Caco-2 (cell line): ENCODE measurements at regions of chr2 and their contacts with region 1.

Region 1: DNA sequence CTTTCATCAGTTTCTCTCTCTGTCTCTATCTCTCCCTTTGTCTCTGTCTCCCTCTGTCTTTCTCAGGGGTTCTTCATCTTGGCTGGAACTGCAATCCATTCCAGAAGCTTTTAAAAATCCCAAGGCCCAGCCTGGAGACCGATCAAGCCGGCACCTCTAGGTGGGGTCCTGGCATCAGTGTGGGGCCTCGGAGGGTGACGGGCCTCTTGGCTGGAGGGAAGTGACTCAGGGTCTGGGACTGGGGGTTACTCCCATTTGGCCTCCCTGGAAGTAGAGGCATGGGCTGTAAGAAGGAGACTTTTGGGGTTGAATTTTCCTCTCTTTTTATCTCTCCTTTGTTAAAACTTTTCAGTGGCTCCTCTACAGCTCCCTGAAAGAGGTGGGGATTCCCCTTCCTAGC is 52.8 kb upstream of the OTOF start:
- DNase-seq: no peak
- H3K4me3 ChIP-seq: no peak overlapping the region
- H3K4me3 Mint-ChIP-seq: no peak overlapping the region
- H3K27ac Mint-ChIP-seq: no peak overlapping the region
- H3K4me1 ChIP-seq: no peaks in the 10 kb centered on the region
- H3K4me1 Mint-ChIP-seq: no peaks in the 10 kb centered on the region
- H3K27me3 ChIP-seq: no peaks in the 10 kb centered on the region
- H3K27me3 Mint-ChIP-seq: peaks cover 3% of the 10 kb centered on the region
- CTCF ChIP-seq: no peak

Region 2: DNA sequence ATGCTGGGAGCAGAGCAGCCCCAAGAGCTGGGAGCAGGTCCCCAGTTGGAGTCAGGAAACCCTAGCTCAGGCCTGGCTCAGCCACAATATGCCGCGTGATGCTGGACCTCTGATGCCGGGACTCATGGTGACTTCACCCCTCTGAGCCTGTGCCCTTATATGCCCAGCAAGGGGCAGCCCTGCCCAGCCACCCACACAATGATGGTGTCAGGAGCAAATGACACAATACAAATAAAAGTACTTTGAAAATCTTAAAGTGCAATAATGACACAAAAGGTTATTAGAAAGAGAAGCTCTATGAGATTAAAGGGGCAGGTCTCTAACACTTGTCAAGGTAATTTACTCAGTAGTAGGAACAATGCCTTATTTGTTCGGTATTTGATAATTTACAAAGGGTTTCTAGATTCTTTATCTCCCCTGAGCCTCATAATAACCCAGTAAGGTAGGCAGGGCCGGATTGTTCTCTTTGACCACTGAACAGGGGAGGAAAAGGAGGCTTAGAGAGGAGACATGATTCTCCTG is 530.1 kb before region 1 on chr2:
- CTCF ChIA-PET with region 1: no interaction called
- POLR2A ChIA-PET with region 1: no interaction called
- intact Hi-C with region 1: no loop called
- DNase-seq: no peak
- H3K4me3 ChIP-seq: no peak overlapping the region
- H3K4me3 Mint-ChIP-seq: no peak overlapping the region
- H3K27ac Mint-ChIP-seq: peak overlapping the region; percentile 95
- H3K4me1 ChIP-seq: peaks cover 37% of the 10 kb centered on the region
- H3K4me1 Mint-ChIP-seq: peaks cover 56% of the 10 kb centered on the region
- H3K27me3 ChIP-seq: no peaks in the 10 kb centered on the region
- H3K27me3 Mint-ChIP-seq: no peaks in the 10 kb centered on the region
- CTCF ChIP-seq: no peak

Region 3: DNA sequence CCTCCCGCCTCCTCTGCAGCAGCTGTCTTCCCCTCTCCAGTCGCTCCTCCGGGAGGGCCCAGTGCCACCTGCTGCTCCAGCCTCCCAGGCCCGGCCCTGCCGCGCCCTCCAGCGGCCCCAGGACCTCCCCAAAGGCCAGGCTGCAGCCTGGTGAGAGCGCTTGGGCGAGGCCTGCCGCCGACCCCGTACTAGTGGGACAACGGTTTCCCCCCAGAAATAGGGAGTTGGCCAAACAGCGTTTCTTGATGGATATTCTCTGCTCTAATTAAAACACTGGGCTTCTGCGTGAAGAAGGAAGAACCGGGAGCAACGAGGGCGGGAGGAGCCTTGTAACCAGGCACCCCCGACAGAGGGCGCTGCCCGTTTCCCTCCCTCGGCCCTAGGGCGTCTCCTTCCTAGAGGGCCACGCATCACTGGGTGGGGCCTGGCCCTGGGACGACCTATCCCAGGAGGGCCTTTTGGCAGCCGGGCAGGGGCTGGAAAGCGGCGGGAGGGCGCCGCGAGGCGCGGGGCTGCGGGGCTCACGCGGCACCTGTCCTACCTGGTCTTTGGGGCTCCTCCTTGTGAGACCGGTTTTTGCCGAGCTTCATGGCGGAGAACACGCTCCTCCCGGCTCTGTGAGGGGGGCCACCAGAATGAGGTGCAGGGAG is 27.3 kb before region 1 on chr2:
- CTCF ChIA-PET with region 1: no interaction called
- POLR2A ChIA-PET with region 1: no interaction called
- intact Hi-C with region 1: no loop called
- DNase-seq: peak; percentile 92 to 93
- H3K4me3 ChIP-seq: peak overlapping the region; percentile 48
- H3K4me3 Mint-ChIP-seq: peak overlapping the region; percentile 78
- H3K27ac Mint-ChIP-seq: peak overlapping the region; percentile 37
- H3K4me1 ChIP-seq: no peaks in the 10 kb centered on the region
- H3K4me1 Mint-ChIP-seq: peaks cover 7% of the 10 kb centered on the region
- H3K27me3 ChIP-seq: no peaks in the 10 kb centered on the region
- H3K27me3 Mint-ChIP-seq: peaks cover 6% of the 10 kb centered on the region
- CTCF ChIP-seq: peak; percentile 84 to 89

Region 4: GRCh38 chr2:26540961-26541360 is 10.3 kb after region 1 on chr2:
- CTCF ChIA-PET with region 1: no interaction called
- POLR2A ChIA-PET with region 1: interaction called, 12 read pairs
- intact Hi-C with region 1: no loop called
- DNase-seq: no peak
- H3K4me3 ChIP-seq: no peak overlapping the region
- H3K4me3 Mint-ChIP-seq: no peak overlapping the region
- H3K27ac Mint-ChIP-seq: no peak overlapping the region
- H3K4me1 ChIP-seq: no peaks in the 10 kb centered on the region
- H3K4me1 Mint-ChIP-seq: no peaks in the 10 kb centered on the region
- H3K27me3 ChIP-seq: no peaks in the 10 kb centered on the region
- H3K27me3 Mint-ChIP-seq: peaks cover 5% of the 10 kb centered on the region
- CTCF ChIP-seq: no peak